Left lung (tissue), 14 donors: ENCODE measurements at regions of chr1 and their contacts with region 1.

Region 1: GRCh38 chr1:173202430-173203145 is 4.5 kb downstream of the TNFSF4 start:
- DNase-seq: peak in 2 of 4 donors; percentile 51 to 78
- ATAC-seq: peak; percentile 90
- H3K4me3 ChIP-seq: no peak overlapping the region
- H3K27ac ChIP-seq: no peak overlapping the region
- H3K4me1 ChIP-seq: peaks cover 0 to 22% of the 10 kb centered on the region in 2 donors
- H3K27me3 ChIP-seq: no peaks in the 10 kb centered on the region
- CTCF ChIP-seq: peak; percentile 52 to 60

Region 2: GRCh38 chr1:172745014-172745413 is 457.6 kb before region 1 on chr1:
- intact Hi-C with region 1: loop called in 1 of 2 experiments (anchors 5 kb)
- DNase-seq: peak in 2 of 4 donors; percentile 76 to 87
- ATAC-seq: peak; percentile 83
- H3K4me3 ChIP-seq: no peak overlapping the region
- H3K27ac ChIP-seq: peak overlapping the region in 1 of 2 donors; percentile 85
- H3K4me1 ChIP-seq: peaks cover 17 to 31% of the 10 kb centered on the region in 2 donors
- H3K27me3 ChIP-seq: no peaks in the 10 kb centered on the region
- CTCF ChIP-seq: peak; percentile 43 to 61

Region 3: DNA sequence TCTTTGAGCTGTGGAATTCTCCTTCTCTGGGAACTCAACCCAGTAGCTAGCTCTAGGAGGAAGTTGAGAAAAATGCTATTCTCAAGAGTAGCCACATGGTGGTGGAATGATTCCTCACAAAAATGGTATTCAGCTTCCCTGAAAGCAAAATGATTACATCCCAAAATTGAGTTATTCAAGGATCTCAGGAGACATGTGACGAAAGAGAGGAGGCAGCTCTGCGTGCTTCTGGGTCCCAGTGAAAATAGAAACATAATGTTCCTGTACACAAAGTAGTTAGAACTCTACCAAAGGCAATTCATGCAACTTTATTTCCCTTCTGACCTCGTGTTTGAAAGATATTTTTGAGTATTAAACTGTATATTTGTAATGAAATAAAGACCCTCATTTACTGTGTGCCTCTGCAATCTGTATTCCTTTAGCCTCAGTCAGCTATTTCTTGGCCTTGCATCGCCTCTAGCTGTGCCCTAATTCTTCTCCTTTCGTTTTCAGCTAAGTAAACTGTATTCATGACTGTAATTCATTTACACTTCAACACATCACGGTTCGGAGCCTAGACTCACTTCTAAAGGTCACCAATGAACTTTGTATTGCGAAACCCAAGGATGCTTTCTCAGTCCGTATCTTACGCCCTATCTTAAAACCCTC is 376.4 kb before region 1 on chr1:
- intact Hi-C with region 1: loop called (anchors 5 to 10 kb)
- DNase-seq: peak in 2 of 4 donors; percentile 65 to 78
- ATAC-seq: peak; percentile 91
- H3K4me3 ChIP-seq: no peak overlapping the region
- H3K27ac ChIP-seq: peak overlapping the region; percentile 57 to 59
- H3K4me1 ChIP-seq: peaks cover 0 to 43% of the 10 kb centered on the region in 2 donors
- H3K27me3 ChIP-seq: no peaks in the 10 kb centered on the region
- CTCF ChIP-seq: peak; percentile 40 to 53

Region 4: GRCh38 chr1:173347282-173347818 is 144.8 kb after region 1 on chr1:
- intact Hi-C with region 1: no loop called
- DNase-seq: no peak
- ATAC-seq: no peak
- H3K4me3 ChIP-seq: no peak overlapping the region
- H3K27ac ChIP-seq: no peak overlapping the region
- H3K4me1 ChIP-seq: no peaks in the 10 kb centered on the region
- H3K27me3 ChIP-seq: no peaks in the 10 kb centered on the region
- CTCF ChIP-seq: no peak